ENCODE measurements at regions of chr12 and their contacts with region 1.

Region 1: DNA sequence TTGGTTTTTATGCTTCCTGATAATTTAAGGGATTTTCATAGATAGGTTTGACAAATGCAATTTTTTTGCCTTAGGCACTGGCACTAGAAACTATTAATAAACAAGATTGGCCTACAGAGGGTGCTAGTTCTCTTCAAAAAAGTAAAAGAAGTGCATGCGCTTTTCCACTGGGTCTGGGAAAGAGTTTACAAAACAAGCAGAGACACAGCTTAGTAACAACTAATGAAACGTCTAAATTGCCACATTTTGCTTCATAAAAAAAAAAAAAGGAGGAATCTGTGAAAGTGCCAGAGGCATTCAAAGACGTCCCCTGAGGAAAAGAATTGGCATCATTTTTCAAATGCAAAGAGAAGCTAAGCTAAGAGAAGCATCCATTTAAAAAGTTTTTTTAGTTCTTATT is 58.3 kb upstream of the EEA1 start:
- DNase-seq: peak; percentile 35
- ATAC-seq: peak; percentile 72
- H3K4me3 Mint-ChIP-seq: no peak overlapping the region
- H3K27ac Mint-ChIP-seq: no peak overlapping the region
- H3K4me1 Mint-ChIP-seq: peaks cover 10% of the 10 kb centered on the region
- H3K27me3 Mint-ChIP-seq: peaks cover 10% of the 10 kb centered on the region

Region 2: GRCh38 chr12:92827836-92828431 is 159.4 kb before region 1 on chr12:
- CTCF ChIA-PET with region 1: interaction called, 14 read pairs
- POLR2A ChIA-PET with region 1: no interaction called
- DNase-seq: peak; percentile 57
- ATAC-seq: no peak
- H3K4me3 Mint-ChIP-seq: no peak overlapping the region
- H3K27ac Mint-ChIP-seq: no peak overlapping the region
- H3K4me1 Mint-ChIP-seq: no peaks in the 10 kb centered on the region
- H3K27me3 Mint-ChIP-seq: no peaks in the 10 kb centered on the region

Region 3: GRCh38 chr12:92871116-92871515 is 116.2 kb before region 1 on chr12:
- CTCF ChIA-PET with region 1: no interaction called
- POLR2A ChIA-PET with region 1: no interaction called
- DNase-seq: no peak
- ATAC-seq: no peak
- H3K4me3 Mint-ChIP-seq: no peak overlapping the region
- H3K27ac Mint-ChIP-seq: no peak overlapping the region
- H3K4me1 Mint-ChIP-seq: peaks cover 6% of the 10 kb centered on the region
- H3K27me3 Mint-ChIP-seq: no peaks in the 10 kb centered on the region

Region 4: DNA sequence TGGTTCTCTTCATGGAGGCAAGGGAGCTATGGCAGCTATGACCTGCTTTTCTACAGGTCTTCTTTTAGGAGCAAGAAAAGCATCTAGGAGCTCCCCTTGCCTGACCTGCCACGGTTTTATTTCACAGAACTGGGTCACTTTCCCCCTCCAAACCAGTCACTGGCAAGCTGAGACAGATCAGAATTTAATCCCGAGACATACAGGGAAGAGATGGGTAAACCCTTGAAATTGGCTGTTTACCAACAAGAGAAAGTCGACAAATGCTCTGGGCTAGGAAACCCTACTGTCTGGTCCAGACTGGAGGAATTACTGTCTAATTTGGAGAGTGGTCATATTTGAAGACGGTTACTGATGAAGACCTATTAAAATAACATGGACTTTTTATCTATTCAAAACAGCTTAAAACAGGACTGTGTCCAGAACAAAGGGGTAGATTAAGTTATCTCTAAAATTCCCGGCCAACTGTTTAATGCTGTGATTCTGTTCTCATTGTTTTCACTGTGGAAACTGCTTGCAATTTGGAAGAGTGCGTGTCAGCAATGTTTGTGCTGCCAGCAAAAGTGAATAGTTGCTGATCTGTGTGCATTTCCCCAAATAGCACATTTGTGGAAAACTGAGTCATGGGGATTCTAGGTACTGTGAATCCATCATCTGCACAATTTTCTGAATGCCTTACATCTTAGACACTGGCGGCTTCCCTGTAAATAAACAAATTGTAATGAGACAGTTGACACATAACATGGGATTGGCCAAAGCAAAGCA is 15.1 kb after region 1 on chr12:
- CTCF ChIA-PET with region 1: interaction called, 22 read pairs
- POLR2A ChIA-PET with region 1: no interaction called
- DNase-seq: no peak
- ATAC-seq: no peak
- H3K4me3 Mint-ChIP-seq: no peak overlapping the region
- H3K27ac Mint-ChIP-seq: no peak overlapping the region
- H3K4me1 Mint-ChIP-seq: no peaks in the 10 kb centered on the region
- H3K27me3 Mint-ChIP-seq: no peaks in the 10 kb centered on the region

Region 5: GRCh38 chr12:93378373-93379325 is 391.3 kb after region 1 on chr12:
- CTCF ChIA-PET with region 1: interaction called, 33 read pairs
- POLR2A ChIA-PET with region 1: no interaction called
- DNase-seq: peak; percentile 73
- ATAC-seq: peak; percentile 59
- H3K4me3 Mint-ChIP-seq: peak overlapping the region; percentile 99
- H3K27ac Mint-ChIP-seq: peak overlapping the region; percentile 99
- H3K4me1 Mint-ChIP-seq: peaks cover 43% of the 10 kb centered on the region
- H3K27me3 Mint-ChIP-seq: no peaks in the 10 kb centered on the region

Region 6: DNA sequence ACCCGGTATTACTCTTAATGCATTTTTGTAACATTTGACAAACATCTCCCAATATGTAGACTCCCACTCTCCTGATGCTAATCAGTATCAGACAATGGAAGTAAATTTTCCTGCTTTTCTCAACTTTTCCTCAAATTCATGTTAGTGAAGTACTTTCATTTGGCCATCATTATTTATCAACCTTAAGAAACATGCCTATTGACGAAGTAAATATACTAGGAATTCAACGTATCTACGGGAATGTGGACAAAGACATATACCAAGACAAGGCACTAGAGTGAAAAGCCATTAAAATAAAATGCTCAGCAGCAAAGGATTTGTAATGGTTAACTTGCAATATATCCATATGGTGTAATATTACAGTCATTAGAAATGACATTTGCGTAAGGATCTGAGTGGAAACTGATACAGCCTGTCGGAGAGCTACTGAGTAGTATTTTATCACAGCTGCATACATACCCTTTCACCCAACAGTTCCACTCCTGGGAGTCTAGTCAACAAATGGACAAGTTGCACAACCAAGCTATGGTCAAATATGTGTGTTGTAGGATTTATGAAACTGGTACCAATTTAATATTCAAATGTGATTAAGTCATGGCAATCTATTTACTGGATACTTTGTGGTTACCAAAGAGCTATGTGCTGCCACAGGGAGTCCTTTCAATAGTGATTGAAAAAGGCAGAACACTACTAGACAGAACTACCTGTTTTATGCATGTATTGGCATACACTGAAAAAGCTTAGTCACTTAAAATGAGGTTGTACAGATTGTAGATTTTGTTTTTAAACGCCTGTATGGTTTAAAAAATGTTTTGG is 416.8 kb after region 1 on chr12:
- CTCF ChIA-PET with region 1: interaction called, 72 read pairs
- POLR2A ChIA-PET with region 1: no interaction called
- DNase-seq: no peak
- ATAC-seq: no peak
- H3K4me3 Mint-ChIP-seq: no peak overlapping the region
- H3K27ac Mint-ChIP-seq: no peak overlapping the region
- H3K4me1 Mint-ChIP-seq: peaks cover 6% of the 10 kb centered on the region
- H3K27me3 Mint-ChIP-seq: no peaks in the 10 kb centered on the region

Region 7: GRCh38 chr12:93502802-93503623 is 515.7 kb after region 1 on chr12:
- CTCF ChIA-PET with region 1: interaction called, 12 read pairs
- POLR2A ChIA-PET with region 1: no interaction called
- DNase-seq: peak; percentile 78
- ATAC-seq: no peak
- H3K4me3 Mint-ChIP-seq: no peak overlapping the region
- H3K27ac Mint-ChIP-seq: no peak overlapping the region
- H3K4me1 Mint-ChIP-seq: peaks cover 17% of the 10 kb centered on the region
- H3K27me3 Mint-ChIP-seq: no peaks in the 10 kb centered on the region